GM12878 (cell line): ENCODE measurements at regions of chr16 and their contacts with region 1.

Region 1: GRCh38 chr16:84754353-84754856 is 54.6 kb downstream of the USP10 start:
- DNase-seq: peak; percentile 78
- ATAC-seq: peak; percentile 82
- H3K4me3 ChIP-seq: no peak overlapping the region; the same call in 1 of the 2 replicates
- H3K27ac ChIP-seq: peak overlapping the region; percentile 56
- H3K4me1 ChIP-seq: peaks cover 54% of the 10 kb centered on the region
- H3K27me3 ChIP-seq: no peaks in the 10 kb centered on the region
- CTCF ChIP-seq: peak; percentile 70 to 85 (median 80)
- EP300 ChIP-seq: no peak
- POLR2A ChIP-seq: no peak
- RAD21 ChIP-seq: peak; percentile 81

Region 2: GRCh38 chr16:84532291-84532724 is 222.1 kb before region 1 on chr16:
- CTCF ChIA-PET with region 1: no interaction called
- POLR2A ChIA-PET with region 1: no interaction called
- RAD21 ChIA-PET with region 1: no interaction called
- SMC1A ChIA-PET with region 1: no interaction called
- in situ Hi-C with region 1: no loop called
- intact Hi-C with region 1: no loop called
- DNase-seq: no peak
- ATAC-seq: no peak
- H3K4me3 ChIP-seq: no peak overlapping the region
- H3K27ac ChIP-seq: no peak overlapping the region
- H3K4me1 ChIP-seq: peaks cover 6% of the 10 kb centered on the region
- H3K27me3 ChIP-seq: no peaks in the 10 kb centered on the region
- CTCF ChIP-seq: no peak
- EP300 ChIP-seq: no peak
- POLR2A ChIP-seq: no peak
- RAD21 ChIP-seq: no peak

Region 3: GRCh38 chr16:84663433-84664101 is 90.8 kb before region 1 on chr16:
- CTCF ChIA-PET with region 1: interaction called, 13 read pairs
- POLR2A ChIA-PET with region 1: interaction called, 3 read pairs
- RAD21 ChIA-PET with region 1: no interaction called
- SMC1A ChIA-PET with region 1: interaction called, 6 read pairs
- in situ Hi-C with region 1: no loop called
- intact Hi-C with region 1: no loop called
- DNase-seq: peak; percentile 76
- ATAC-seq: peak; percentile 96
- H3K4me3 ChIP-seq: no peak overlapping the region
- H3K27ac ChIP-seq: 0 out of 2 replicates have a peak overlapping the region, but pooled peaks have one; percentile 38
- H3K4me1 ChIP-seq: peaks cover 22% of the 10 kb centered on the region
- H3K27me3 ChIP-seq: no peaks in the 10 kb centered on the region
- CTCF ChIP-seq: no peak
- EP300 ChIP-seq: no peak
- POLR2A ChIP-seq: 0 out of 2 replicates have a peak, but pooled peaks have one; percentile 18
- RAD21 ChIP-seq: no peak

Region 4: DNA sequence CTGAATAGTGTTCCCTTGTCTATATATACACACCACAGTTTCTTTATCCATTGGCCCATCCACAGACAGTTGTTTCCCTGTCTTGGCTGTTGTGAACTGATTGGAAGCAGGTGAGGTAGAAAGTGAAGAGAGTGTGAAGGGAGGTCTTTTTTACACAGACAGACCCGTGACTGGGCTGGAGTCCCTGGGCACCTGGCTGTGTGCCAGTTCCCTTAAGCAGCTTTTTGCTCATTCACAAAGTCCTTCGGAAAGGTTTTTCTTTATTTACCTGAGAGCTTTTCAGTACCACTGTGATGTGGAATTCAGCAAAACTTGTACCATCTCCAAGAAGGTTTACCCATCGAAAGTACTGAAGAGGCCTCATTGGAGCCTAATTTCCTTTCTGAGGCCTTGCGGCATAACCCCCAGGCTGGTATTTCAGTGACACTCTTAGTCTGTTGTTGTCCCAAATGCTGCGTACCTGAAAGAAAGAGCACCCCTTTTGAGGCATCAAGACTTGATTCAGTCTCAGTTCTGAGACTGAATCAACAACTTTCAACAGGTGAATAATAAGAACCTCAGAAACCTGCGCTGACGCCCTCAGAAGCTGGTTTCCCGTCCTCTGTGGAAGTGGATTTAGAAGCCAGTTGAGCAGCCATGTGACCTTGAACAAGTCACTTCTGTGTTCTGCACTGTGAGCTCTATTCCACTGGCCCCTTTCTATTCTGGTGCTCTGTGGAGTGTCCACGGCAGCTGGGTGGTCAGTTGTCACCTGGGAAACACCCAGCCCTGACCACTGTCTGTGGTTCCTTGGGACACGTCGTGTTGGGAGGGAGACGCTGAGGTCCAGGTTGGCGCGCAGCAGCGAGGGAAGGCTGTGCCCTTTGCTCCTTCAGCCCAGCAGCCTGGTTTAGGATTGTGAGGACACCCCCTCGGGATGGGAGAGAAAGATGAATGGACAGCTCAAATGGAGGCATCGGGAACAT is 11.5 kb after region 1 on chr16:
- CTCF ChIA-PET with region 1: interaction called, 19 read pairs
- POLR2A ChIA-PET with region 1: no interaction called
- RAD21 ChIA-PET with region 1: interaction called, 3 read pairs
- SMC1A ChIA-PET with region 1: interaction called, 12 read pairs
- in situ Hi-C with region 1: no loop called
- intact Hi-C with region 1: no loop called
- DNase-seq: no peak
- ATAC-seq: no peak
- H3K4me3 ChIP-seq: no peak overlapping the region
- H3K27ac ChIP-seq: no peak overlapping the region
- H3K4me1 ChIP-seq: no peaks in the 10 kb centered on the region
- H3K27me3 ChIP-seq: no peaks in the 10 kb centered on the region
- CTCF ChIP-seq: no peak
- EP300 ChIP-seq: no peak
- POLR2A ChIP-seq: no peak; the same call in 1 of the 2 replicates
- RAD21 ChIP-seq: no peak

Region 5: GRCh38 chr16:84898447-84898846 is 144.0 kb after region 1 on chr16:
- CTCF ChIA-PET with region 1: interaction called, 3 read pairs
- POLR2A ChIA-PET with region 1: no interaction called
- RAD21 ChIA-PET with region 1: no interaction called
- SMC1A ChIA-PET with region 1: interaction called, 4 read pairs
- in situ Hi-C with region 1: no loop called
- intact Hi-C with region 1: loop called (anchors 10 kb)
- DNase-seq: no peak
- ATAC-seq: no peak
- H3K4me3 ChIP-seq: no peak overlapping the region
- H3K27ac ChIP-seq: no peak overlapping the region
- H3K4me1 ChIP-seq: peaks cover 3% of the 10 kb centered on the region
- H3K27me3 ChIP-seq: no peaks in the 10 kb centered on the region; a peak in 1 of 4 replicates
- CTCF ChIP-seq: no peak
- EP300 ChIP-seq: no peak
- POLR2A ChIP-seq: no peak
- RAD21 ChIP-seq: no peak

Region 6: DNA sequence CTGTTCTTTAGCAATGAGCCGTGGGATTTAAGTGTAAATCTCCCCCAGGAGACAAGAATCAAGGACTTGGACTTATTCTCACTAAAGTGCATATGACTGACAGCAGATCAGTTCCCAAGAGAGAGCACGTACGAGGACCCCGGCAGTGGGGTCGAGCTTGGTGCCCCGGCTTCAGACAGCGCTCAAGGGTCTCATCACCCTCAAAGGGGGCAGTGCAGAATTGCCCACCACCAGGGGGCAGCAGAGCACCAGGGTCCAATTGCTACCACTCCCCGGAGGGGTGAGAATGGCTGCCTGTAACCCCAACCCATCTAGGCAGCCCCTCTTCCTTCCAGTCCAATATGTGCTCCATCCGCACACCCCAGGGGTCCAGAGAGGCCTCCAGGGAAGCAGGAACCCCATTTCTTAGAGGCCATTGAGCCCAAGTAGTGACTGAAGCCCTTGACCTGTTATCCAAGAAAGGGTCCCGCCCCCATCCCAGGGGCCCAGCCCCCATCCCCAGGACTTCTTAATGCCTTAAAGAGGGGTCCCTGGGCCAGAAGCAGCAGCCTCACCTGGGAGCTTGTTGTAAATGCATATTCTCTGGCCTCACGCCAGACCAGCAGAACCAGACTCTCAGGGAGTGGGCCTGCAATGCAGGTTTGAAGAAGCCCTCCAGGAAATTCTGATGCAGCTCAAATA is 170.8 kb after region 1 on chr16:
- CTCF ChIA-PET with region 1: interaction called, 24 read pairs
- POLR2A ChIA-PET with region 1: no interaction called
- RAD21 ChIA-PET with region 1: interaction called, 4 read pairs
- SMC1A ChIA-PET with region 1: interaction called, 7 read pairs
- in situ Hi-C with region 1: no loop called
- intact Hi-C with region 1: no loop called
- DNase-seq: no peak
- ATAC-seq: peak; percentile 90
- H3K4me3 ChIP-seq: no peak overlapping the region
- H3K27ac ChIP-seq: no peak overlapping the region
- H3K4me1 ChIP-seq: no peaks in the 10 kb centered on the region
- H3K27me3 ChIP-seq: no peaks in the 10 kb centered on the region
- CTCF ChIP-seq: peak; percentile 73 to 84 (median 73)
- EP300 ChIP-seq: no peak
- POLR2A ChIP-seq: no peak
- RAD21 ChIP-seq: peak; percentile 71

Region 7: DNA sequence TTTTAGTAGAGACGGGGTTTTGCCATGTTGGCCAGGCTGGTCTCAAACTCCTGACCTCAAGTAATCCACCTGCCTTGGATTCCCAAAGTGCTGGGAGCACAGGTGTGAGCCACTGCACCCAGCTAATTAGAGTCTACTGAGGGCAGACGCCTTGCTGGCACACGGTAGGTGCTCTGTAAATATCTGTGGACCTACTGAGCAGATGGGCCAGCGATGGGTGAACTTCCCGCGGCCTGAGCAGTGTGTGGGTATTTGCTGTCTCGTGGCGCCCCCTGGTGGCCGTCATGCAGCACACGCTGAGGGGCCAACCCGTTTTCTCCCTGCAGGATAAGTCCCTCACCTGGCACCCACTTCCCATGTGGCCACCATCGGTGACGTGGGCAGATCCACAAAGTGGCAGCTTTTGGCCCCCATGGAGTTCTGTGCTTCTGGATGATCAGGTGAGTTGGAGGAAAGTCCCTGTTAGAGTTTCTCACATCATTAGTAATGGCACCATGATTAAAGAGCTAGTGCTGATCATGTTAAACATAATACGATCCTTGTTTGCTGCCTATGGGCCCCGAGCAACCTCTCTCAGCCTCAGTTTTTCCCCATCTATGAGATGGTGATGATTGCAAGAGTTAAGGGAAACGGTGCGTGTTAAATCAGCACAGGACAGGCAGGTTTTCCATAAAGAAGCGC is 216.2 kb after region 1 on chr16:
- CTCF ChIA-PET with region 1: interaction called, 157 read pairs
- POLR2A ChIA-PET with region 1: interaction called, 5 read pairs
- RAD21 ChIA-PET with region 1: interaction called, 84 read pairs
- SMC1A ChIA-PET with region 1: interaction called, 142 read pairs
- in situ Hi-C with region 1: loop called (anchors 5 kb)
- intact Hi-C with region 1: loop called (anchors 1 kb)
- DNase-seq: peak; percentile 27
- ATAC-seq: peak; percentile 99
- H3K4me3 ChIP-seq: no peak overlapping the region
- H3K27ac ChIP-seq: no peak overlapping the region
- H3K4me1 ChIP-seq: no peaks in the 10 kb centered on the region
- H3K27me3 ChIP-seq: no peaks in the 10 kb centered on the region
- CTCF ChIP-seq: peak; percentile 89 to 92 (median 90)
- EP300 ChIP-seq: no peak
- POLR2A ChIP-seq: no peak
- RAD21 ChIP-seq: peak; percentile 82

Region 8: GRCh38 chr16:85086347-85087291 is 332.2 kb after region 1 on chr16:
- CTCF ChIA-PET with region 1: no interaction called
- POLR2A ChIA-PET with region 1: no interaction called
- RAD21 ChIA-PET with region 1: no interaction called
- SMC1A ChIA-PET with region 1: no interaction called
- in situ Hi-C with region 1: no loop called
- intact Hi-C with region 1: no loop called
- DNase-seq: no peak
- ATAC-seq: peak; percentile 91
- H3K4me3 ChIP-seq: no peak overlapping the region
- H3K27ac ChIP-seq: no peak overlapping the region
- H3K4me1 ChIP-seq: peaks cover 30% of the 10 kb centered on the region
- H3K27me3 ChIP-seq: no peaks in the 10 kb centered on the region
- CTCF ChIP-seq: peak; percentile 75 to 81 (median 79)
- EP300 ChIP-seq: no peak
- POLR2A ChIP-seq: no peak
- RAD21 ChIP-seq: peak; percentile 82